ENCODE measurements at regions of chr7 and their contacts with region 1.

Region 1: GRCh38 chr7:104923010-104923421 is 91.0 kb upstream of the KMT2E start:
- DNase-seq: peak; percentile 89
- H3K4me3 ChIP-seq: no peak overlapping the region
- H3K27ac ChIP-seq: peak overlapping the region; percentile 75 to 79 (median 76)
- H3K4me1 ChIP-seq: peaks cover 5 to 48% (median 24%) of the 10 kb centered on the region in 4 donors
- H3K27me3 ChIP-seq: no peaks in the 10 kb centered on the region
- CTCF ChIP-seq: peak; percentile 65 to 90 (median 68)
- EP300 ChIP-seq: no peak
- POLR2A ChIP-seq: no peak

Region 2: GRCh38 chr7:104883718-104884452 is 39.1 kb before region 1 on chr7:
- in situ Hi-C with region 1: loop called in 1 of 4 experiments (anchors 5 kb)
- intact Hi-C with region 1: loop called (anchors 5 kb)
- DNase-seq: peak; percentile 94
- H3K4me3 ChIP-seq: peak overlapping the region in 1 of 4 donors; percentile 33
- H3K27ac ChIP-seq: peak overlapping the region; percentile 60 to 78 (median 68)
- H3K4me1 ChIP-seq: peaks cover 0 to 21% (median 13%) of the 10 kb centered on the region in 4 donors
- H3K27me3 ChIP-seq: no peaks in the 10 kb centered on the region
- CTCF ChIP-seq: peak; percentile 88 to 92 (median 92)
- EP300 ChIP-seq: no peak
- POLR2A ChIP-seq: no peak

Measured in transverse colon (tissue), 4 donors.